Mammary epithelial cell (primary cell): ENCODE measurements at regions of chr3 and their contacts with region 1.

Region 1: DNA sequence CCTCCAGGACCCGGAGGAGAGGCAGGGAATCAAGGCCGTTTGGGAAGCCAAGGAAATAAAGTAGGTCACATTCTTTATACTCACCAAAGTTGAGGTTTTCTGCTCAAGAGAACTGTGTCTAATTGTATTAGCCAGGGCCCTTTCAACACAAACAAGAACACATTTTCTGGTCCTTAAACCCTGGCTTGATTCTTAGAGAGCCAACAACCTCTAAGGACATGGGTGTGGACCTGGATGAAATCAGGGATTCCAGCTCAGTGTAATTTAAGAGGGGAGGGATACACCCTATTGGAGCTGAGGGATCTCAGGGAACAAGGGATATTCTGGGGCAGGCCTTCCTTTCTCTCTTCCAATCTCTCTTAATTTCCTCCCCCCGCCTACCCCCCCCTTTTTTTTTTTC is 104.8 kb downstream of the COL6A6 start:
- DNase-seq: no peak
- H3K4me3 ChIP-seq: no peak overlapping the region
- H3K27ac ChIP-seq: no peak overlapping the region
- H3K4me1 ChIP-seq: no peaks in the 10 kb centered on the region
- H3K27me3 ChIP-seq: peaks cover 7% of the 10 kb centered on the region
- CTCF ChIP-seq: no peak

Region 2: DNA sequence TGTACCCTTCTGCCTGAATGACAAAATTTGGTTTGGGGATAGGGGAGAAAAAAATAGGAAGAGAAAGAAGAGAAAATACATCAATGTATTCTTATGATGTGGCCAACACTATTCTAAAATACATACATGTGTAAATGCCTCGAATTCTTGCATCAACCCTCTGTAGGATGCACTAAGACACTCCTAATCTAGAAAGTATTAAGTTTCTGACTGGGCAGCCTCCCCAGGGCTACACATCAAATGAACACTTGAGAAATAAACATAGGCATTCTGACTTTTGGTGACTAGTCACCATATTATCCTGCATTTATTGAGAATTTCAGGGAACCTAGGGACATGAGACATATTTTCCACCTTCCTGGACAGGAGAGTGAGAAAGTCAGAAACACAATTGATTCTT is 1303.7 kb after region 1 on chr3:
- CTCF ChIA-PET with region 1: interaction called, 10 read pairs
- dilution Hi-C with region 1: no loop called
- in situ Hi-C with region 1: no loop called
- intact Hi-C with region 1: no loop called
- DNase-seq: no peak
- H3K4me3 ChIP-seq: no peak overlapping the region
- H3K27ac ChIP-seq: no peak overlapping the region
- H3K4me1 ChIP-seq: no peaks in the 10 kb centered on the region
- H3K27me3 ChIP-seq: no peaks in the 10 kb centered on the region
- CTCF ChIP-seq: no peak